Naive thymus-derived CD4-positive, alpha-beta T cell (primary cell): ENCODE measurements at regions of chr22 and their contacts with region 1.

Region 1: DNA sequence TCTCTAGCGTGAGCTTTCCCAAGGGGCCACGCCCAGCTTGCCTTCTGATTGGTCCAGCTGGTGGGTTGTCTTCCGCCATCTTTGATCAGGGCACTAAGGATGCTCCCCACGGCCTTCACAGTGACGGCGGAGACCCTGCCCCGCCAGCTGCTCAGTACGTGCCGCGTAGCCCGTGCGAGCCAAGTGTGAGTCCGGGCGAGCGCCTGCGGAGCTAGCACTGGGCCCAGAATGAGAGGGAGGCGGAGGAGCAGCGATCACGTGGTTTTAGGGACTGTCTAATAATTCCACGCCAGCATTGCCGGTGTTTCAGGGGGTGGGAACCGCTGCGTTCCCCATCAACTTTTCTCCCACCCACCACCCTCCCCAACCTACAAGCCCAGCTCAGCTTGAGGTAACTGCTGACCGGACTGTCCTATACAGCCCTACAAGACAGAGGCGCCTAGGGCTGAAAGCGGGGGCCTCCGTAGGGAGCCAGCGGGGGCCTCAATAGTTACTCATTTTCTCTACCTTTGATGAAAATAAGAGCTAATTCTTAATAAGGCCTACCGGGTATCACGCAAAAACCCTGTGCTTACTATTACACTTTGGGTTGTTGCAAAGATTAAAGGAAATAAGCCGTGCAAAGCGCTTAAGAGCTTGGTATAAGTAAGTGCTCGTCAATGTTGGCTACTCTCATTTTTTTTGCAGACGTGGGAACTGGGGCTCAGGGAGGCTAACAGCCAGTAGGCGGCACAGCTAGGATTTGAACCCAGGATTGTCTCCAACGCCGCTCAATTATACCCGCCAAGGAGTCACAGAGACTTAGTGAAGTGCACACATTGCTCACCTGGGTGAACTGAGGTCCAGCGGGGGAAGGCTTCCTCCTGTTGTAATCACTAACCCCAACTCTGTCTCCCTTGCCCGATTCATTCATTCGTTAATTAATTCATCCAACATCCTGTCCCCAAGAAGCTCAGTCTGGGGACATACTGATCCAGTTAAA is 1.3 kb upstream of the MTFP1 start:
- DNase-seq: peak; percentile 82 to 99 (median 98)
- ATAC-seq: peak; percentile 92
- H3K4me3 ChIP-seq: peak overlapping the region; percentile 76
- H3K4me3 Mint-ChIP-seq: peak overlapping the region; percentile 94 to 99 (median 98)
- H3K27ac ChIP-seq: peak overlapping the region; percentile 97
- H3K27ac Mint-ChIP-seq: peak overlapping the region; percentile 96 to 100 (median 98)
- H3K4me1 ChIP-seq: peaks cover 28 to 36% of the 10 kb centered on the region in 2 donors
- H3K4me1 Mint-ChIP-seq: peaks cover 30 to 71% (median 64%) of the 10 kb centered on the region in 7 donors
- H3K27me3 ChIP-seq: no peaks in the 10 kb centered on the region
- H3K27me3 Mint-ChIP-seq: peaks cover 0 to 4% (median 0%) of the 10 kb centered on the region in 5 donors

Region 2: DNA sequence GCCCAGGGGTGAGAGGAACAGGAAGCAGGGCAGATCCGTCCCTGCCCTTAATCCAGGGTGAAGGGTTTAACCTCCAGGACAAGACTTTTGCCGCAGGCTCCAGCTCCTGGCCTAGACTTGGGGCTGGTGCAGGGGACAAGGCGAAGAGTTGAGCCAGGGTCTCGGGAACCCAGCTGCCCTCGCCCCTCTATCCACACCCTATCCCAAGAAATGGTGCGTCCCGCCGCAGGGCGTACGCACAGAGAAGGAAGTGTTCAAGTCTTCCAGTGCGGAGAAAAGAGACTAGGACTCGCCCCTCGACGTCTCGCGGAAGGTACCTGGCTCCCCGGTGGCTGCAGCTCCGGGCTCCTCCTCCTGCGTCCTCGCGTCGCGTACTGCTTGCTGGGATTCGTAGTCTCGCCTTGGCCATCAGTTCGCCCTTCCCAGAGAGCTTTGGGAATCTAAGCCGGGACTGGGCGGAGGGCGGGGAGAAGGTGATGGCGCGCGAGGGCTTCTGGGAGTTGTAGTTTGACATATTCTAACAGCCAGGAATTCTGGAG is 657.6 kb before region 1 on chr22 and contains the start of gene ZMAT5:
- CTCF ChIA-PET with region 1: no interaction called
- POLR2A ChIA-PET with region 1: no interaction called
- intact Hi-C with region 1: loop called (anchors 1 to 5 kb)
- DNase-seq: peak; percentile 68 to 96 (median 93)
- ATAC-seq: peak; percentile 98
- H3K4me3 ChIP-seq: peak within 1 kb of the TSS; percentile 84
- H3K4me3 Mint-ChIP-seq: peak within 1 kb of the TSS; percentile 95 to 100 (median 99)
- H3K27ac ChIP-seq: peak within 1 kb of the TSS; percentile 88
- H3K27ac Mint-ChIP-seq: peak within 1 kb of the TSS; percentile 92 to 99 (median 97)
- H3K4me1 ChIP-seq: peaks cover 16 to 17% of the 10 kb centered on the region in 2 donors
- H3K4me1 Mint-ChIP-seq: peaks cover 21 to 59% (median 39%) of the 10 kb centered on the region in 7 donors
- H3K27me3 ChIP-seq: no peaks in the 10 kb centered on the region
- H3K27me3 Mint-ChIP-seq: no peaks in the 10 kb centered on the region
- total RNA-seq, gene ZMAT5: 12.9 to 26.4 (median 14.7) TPM

Region 3: DNA sequence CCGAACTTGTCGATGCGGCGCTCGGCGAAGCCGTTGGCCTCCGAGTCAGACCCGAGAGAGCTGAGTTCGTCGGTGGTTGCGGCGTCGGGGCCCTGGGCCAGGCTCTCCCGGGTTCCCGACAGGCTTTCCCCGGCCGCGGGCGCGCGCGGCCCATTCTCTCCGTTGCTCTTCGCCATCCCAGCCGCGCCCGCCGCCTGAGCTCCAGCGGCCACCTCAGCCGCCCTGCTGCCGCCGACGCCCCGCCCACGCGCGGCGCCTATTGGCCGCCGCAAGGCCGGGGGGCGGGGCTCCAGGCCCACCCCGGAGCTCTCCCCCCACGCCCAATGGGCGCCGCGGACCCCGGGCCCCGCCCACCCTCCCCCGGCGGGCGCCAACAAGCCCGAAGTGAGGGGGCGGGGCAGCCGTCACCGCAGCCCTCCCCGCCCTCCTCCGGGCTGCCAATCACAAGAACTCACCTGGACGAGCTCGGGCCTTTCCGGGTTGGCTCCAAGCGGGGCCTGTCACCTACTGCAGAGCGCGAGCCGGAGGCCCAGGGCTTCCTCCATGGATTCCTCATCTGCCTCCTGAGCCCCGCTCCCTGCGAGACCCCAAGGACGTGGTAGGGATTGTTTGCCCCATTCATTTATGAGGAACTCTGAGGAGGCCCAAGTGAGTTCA is 97.4 kb before region 1 on chr22 and contains the start of gene TBC1D10A:
- CTCF ChIA-PET with region 1: interaction called, 3 read pairs
- POLR2A ChIA-PET with region 1: interaction called, 7 read pairs
- intact Hi-C with region 1: loop called in 1 of 2 experiments (anchors 1 kb)
- DNase-seq: peak; percentile 87 to 93 (median 92)
- ATAC-seq: peak; percentile 97
- H3K4me3 ChIP-seq: peak within 1 kb of the TSS; percentile 83
- H3K4me3 Mint-ChIP-seq: peak within 1 kb of the TSS; percentile 87 to 96 (median 93)
- H3K27ac ChIP-seq: peak within 1 kb of the TSS; percentile 78
- H3K27ac Mint-ChIP-seq: peak within 1 kb of the TSS; percentile 82 to 94 (median 90)
- H3K4me1 ChIP-seq: peaks cover 43 to 49% of the 10 kb centered on the region in 2 donors
- H3K4me1 Mint-ChIP-seq: peaks cover 37 to 55% (median 48%) of the 10 kb centered on the region in 7 donors
- H3K27me3 ChIP-seq: no peaks in the 10 kb centered on the region
- H3K27me3 Mint-ChIP-seq: no peaks in the 10 kb centered on the region
- total RNA-seq, gene TBC1D10A: 47.2 to 73.8 (median 70.9) TPM

Region 4: DNA sequence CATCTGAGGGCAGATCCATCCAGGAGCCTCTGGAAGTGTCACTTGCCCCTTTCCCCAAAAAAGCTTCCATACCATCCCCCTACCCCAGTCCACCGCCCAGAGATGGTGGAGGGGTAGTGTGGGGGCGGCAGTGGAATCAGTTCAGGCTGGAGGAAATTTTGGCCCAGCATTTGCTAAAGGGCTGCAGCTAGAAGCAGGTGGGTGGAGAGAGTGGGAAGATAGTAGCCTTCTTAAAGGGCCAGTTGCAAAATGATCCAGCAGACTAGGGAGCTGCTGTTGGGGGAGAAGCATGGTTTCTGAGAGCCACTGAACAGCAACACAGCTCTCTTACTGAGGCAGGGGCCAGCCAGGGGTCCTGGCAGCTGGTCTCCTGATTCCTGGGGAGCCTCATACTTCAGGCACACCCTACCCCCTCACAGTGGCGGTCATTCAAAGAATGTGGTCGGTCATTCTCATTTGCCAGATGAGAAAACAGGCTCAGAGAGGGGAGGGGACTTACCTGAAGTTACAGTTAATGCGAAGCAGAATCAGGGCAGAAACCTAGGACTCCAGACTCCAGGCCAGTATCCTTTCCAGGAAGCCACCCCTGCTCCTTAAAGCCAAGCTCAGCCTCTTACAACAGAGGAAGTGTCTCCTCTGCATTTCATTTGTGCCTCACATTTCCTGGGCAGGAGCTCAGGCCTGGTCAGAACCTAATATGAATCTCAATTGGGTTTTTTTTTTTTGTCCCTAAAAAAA is 22.1 kb before region 1 on chr22:
- CTCF ChIA-PET with region 1: interaction called, 38 read pairs
- POLR2A ChIA-PET with region 1: interaction called, 158 read pairs
- intact Hi-C with region 1: loop called in 1 of 2 experiments (anchors 1 kb)
- DNase-seq: no peak
- ATAC-seq: no peak
- H3K4me3 ChIP-seq: no peak overlapping the region
- H3K4me3 Mint-ChIP-seq: no peak overlapping the region
- H3K27ac ChIP-seq: no peak overlapping the region
- H3K27ac Mint-ChIP-seq: peak overlapping the region in 5 of 9 donors; percentile 1 to 89 (median 63)
- H3K4me1 ChIP-seq: peaks cover 6 to 13% of the 10 kb centered on the region in 2 donors
- H3K4me1 Mint-ChIP-seq: peaks cover 16 to 35% (median 20%) of the 10 kb centered on the region in 7 donors
- H3K27me3 ChIP-seq: no peaks in the 10 kb centered on the region
- H3K27me3 Mint-ChIP-seq: peaks cover 0 to 5% (median 0%) of the 10 kb centered on the region in 5 donors

Region 5: DNA sequence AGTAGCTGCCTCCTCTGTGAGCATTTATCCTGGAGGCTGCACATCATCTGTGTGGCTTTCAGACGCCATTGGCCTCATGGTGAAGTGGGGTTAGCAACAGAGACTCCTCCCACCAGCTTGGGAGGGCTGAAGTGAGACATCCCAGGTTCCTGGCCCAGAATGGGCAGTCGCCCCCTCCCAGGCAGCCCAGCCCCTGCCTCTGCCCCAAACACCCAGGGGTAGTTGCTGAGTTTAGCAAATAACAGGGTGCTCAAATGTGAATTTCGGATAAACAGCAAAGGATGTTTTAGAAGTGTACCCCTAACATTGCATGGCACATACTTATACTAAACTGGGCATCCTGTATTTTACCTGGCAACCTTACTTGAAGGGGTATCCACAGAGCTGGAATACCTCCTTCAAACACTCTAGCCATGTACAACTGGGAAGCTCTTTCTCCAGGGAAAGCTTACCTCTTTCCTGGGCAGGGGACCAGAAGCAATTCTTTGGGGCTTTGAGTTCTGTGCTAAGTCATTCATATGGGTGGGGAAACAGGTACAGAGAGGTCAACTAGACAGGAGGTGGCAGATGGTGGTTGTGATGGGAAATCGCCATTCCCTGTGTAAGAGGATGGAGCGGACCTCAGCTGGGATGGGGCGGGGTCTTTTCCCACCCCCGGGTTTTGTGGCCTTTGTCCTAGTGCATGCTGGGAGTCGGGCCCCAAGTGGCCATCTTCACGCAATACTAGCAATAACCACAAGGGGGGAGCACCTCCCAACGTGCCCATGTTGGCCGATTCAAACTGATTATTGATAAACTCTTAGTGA is 20.6 kb after region 1 on chr22:
- CTCF ChIA-PET with region 1: interaction called, 4 read pairs
- POLR2A ChIA-PET with region 1: no interaction called
- intact Hi-C with region 1: loop called in 1 of 2 experiments (anchors 1 kb)
- DNase-seq: peak in 4 of 9 donors; percentile 34 to 61 (median 46)
- ATAC-seq: peak; percentile 54
- H3K4me3 ChIP-seq: no peak overlapping the region
- H3K4me3 Mint-ChIP-seq: no peak overlapping the region
- H3K27ac ChIP-seq: no peak overlapping the region
- H3K27ac Mint-ChIP-seq: no peak overlapping the region
- H3K4me1 ChIP-seq: peaks cover 0 to 9% of the 10 kb centered on the region in 2 donors
- H3K4me1 Mint-ChIP-seq: peaks cover 13 to 35% (median 18%) of the 10 kb centered on the region in 7 donors
- H3K27me3 ChIP-seq: no peaks in the 10 kb centered on the region
- H3K27me3 Mint-ChIP-seq: peaks cover 32 to 76% (median 56%) of the 10 kb centered on the region in 5 donors

Region 6: GRCh38 chr22:30471616-30472318 is 47.5 kb after region 1 on chr22 and contains the start of gene SEC14L3:
- CTCF ChIA-PET with region 1: no interaction called
- POLR2A ChIA-PET with region 1: no interaction called
- intact Hi-C with region 1: no loop called
- DNase-seq: no peak
- ATAC-seq: no peak
- H3K4me3 ChIP-seq: no peak within 1 kb of the TSS
- H3K4me3 Mint-ChIP-seq: peak within 1 kb of the TSS in 1 of 10 donors; percentile 27
- H3K27ac ChIP-seq: no peak within 1 kb of the TSS
- H3K27ac Mint-ChIP-seq: peak within 1 kb of the TSS in 1 of 9 donors; percentile 42
- H3K4me1 ChIP-seq: no peaks in the 10 kb centered on the region
- H3K4me1 Mint-ChIP-seq: peaks cover 0 to 13% (median 0%) of the 10 kb centered on the region in 7 donors
- H3K27me3 ChIP-seq: no peaks in the 10 kb centered on the region
- H3K27me3 Mint-ChIP-seq: peaks cover 12 to 20% (median 14%) of the 10 kb centered on the region in 5 donors
- total RNA-seq, gene SEC14L3: not detected

Region 7: DNA sequence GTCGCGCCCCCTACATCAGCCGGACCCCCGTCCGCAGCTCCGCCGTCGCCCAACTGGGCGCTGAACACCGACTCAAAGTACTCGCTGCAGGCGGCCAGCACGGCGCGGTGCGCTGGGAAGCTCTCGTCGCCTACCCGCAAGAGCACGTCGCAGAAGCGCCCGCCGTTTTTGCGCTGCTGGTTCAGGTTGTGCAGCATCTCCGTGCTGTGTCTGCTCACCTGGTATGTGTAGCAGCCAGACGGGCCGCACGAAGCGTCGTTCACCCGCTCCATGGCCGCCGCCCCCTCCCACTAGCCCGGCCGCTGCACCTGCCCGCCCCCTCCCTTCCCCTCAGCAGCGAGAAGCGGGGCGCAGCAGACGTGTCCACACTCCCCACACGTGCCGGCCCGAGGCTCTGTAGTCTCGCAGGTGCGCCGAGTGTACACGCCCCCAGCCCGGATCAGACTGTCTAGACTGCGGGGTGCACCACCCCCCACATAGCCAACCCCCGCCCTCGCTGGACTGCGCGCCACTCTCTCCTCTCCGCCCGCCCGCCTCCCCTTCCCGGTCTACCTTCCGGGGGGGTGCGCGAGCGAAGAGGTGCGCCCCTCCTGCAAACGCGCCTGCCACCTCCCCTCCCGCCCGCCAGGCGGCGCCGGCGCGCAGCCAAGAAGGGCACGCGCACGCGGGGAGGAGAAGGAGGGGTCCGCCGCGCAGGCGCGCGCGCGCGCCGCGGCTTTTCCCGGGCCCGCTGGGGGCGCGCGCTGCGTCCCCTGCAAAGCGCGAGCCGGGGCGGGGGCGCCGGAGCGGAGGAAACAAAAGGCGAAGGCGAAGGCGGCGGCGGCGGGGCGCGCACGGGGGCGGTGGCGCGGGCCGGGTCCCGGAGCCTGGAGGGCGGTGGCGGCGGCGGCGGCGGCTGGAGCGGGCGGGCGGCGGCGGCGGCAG is 921.3 kb after region 1 on chr22:
- CTCF ChIA-PET with region 1: no interaction called
- POLR2A ChIA-PET with region 1: interaction called, 4 read pairs
- intact Hi-C with region 1: loop called in 1 of 2 experiments (anchors 5 kb)
- DNase-seq: peak; percentile 91 to 95 (median 93)
- ATAC-seq: peak; percentile 83
- H3K4me3 ChIP-seq: peak overlapping the region; percentile 60
- H3K4me3 Mint-ChIP-seq: peak overlapping the region; percentile 85 to 91 (median 88)
- H3K27ac ChIP-seq: peak overlapping the region; percentile 74
- H3K27ac Mint-ChIP-seq: peak overlapping the region; percentile 81 to 97 (median 92)
- H3K4me1 ChIP-seq: peaks cover 26 to 42% of the 10 kb centered on the region in 2 donors
- H3K4me1 Mint-ChIP-seq: peaks cover 32 to 57% (median 48%) of the 10 kb centered on the region in 7 donors
- H3K27me3 ChIP-seq: no peaks in the 10 kb centered on the region
- H3K27me3 Mint-ChIP-seq: peaks cover 0 to 4% (median 0%) of the 10 kb centered on the region in 5 donors